Prostate gland (tissue), 2 donors: ENCODE measurements at regions of chr6 and their contacts with region 1.

Region 1: GRCh38 chr6:18323935-18324705 is 59.8 kb upstream of the DEK start:
- DNase-seq: peak; percentile 32
- H3K4me3 ChIP-seq: no peak overlapping the region
- H3K27ac ChIP-seq: no peak overlapping the region
- H3K4me1 ChIP-seq: no peaks in the 10 kb centered on the region
- H3K27me3 ChIP-seq: no peaks in the 10 kb centered on the region
- CTCF ChIP-seq: peak; percentile 24 to 80 (median 78)
- POLR2A ChIP-seq: no peak

Region 2: DNA sequence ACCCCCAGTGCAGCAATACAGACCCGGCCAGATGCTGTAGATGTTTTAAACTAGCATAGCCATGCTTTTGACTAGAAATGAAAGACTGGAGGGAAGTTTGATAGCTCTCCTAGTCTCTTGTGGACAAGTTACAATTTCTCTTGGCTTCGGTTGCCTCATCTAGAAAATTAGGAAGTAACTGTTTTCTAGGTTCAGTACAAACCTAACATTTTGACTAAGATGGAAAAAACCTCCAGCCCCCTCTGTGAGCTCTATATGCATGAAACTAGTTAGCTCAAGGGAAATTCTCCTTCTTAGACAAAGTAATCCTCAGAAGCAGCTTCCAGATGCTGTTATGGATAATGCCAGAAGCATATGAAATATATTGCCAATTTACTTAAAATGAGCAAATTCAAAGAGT is 149.6 kb after region 1 on chr6:
- intact Hi-C with region 1: no loop called
- DNase-seq: no peak
- H3K4me3 ChIP-seq: no peak overlapping the region
- H3K27ac ChIP-seq: no peak overlapping the region
- H3K4me1 ChIP-seq: no peaks in the 10 kb centered on the region
- H3K27me3 ChIP-seq: no peaks in the 10 kb centered on the region
- CTCF ChIP-seq: no peak
- POLR2A ChIP-seq: no peak

Region 3: GRCh38 chr6:18488526-18489270 is 164.6 kb after region 1 on chr6:
- intact Hi-C with region 1: no loop called
- DNase-seq: no peak
- H3K4me3 ChIP-seq: no peak overlapping the region
- H3K27ac ChIP-seq: peak overlapping the region in 1 of 2 donors; percentile 13
- H3K4me1 ChIP-seq: peaks cover under 1% of the 10 kb centered on the region
- H3K27me3 ChIP-seq: no peaks in the 10 kb centered on the region
- CTCF ChIP-seq: no peak
- POLR2A ChIP-seq: no peak

Region 4: GRCh38 chr6:18503593-18504231 is 179.6 kb after region 1 on chr6:
- intact Hi-C with region 1: loop called (anchors 2 kb)
- DNase-seq: peak; percentile 71
- H3K4me3 ChIP-seq: no peak overlapping the region
- H3K27ac ChIP-seq: peak overlapping the region; percentile 12 to 13
- H3K4me1 ChIP-seq: no peaks in the 10 kb centered on the region
- H3K27me3 ChIP-seq: no peaks in the 10 kb centered on the region
- CTCF ChIP-seq: peak; percentile 44 to 93 (median 85)
- POLR2A ChIP-seq: no peak